RWPE1 (cell line): ENCODE measurements at regions of chr1 and their contacts with region 1.

Region 1: GRCh38 chr1:223556414-223557129 is 108.9 kb downstream of the CAPN8 start:
- DNase-seq: peak; percentile 36
- H3K27ac ChIP-seq: no peak overlapping the region
- CTCF ChIP-seq: no peak; the same call in 1 of the 2 replicates

Region 2: DNA sequence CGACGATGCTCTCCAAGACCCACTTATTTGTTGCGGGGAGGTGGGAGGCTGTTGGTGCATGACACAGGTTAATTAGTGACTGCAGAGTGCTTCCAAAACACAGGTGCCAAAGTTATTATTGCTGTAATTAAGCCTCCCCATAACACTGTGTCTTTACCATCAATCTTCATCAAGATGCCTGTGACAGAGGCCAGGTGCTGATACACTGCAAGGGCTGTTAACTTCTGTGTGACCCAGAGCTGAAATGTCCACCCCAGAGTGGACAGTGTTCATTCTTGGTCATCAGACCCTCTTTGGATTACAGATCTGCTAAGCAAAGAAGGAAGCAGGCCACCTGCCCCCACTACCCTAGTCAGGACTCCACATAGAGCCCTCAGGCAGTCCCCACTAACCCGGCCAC is 53.4 kb after region 1 on chr1:
- CTCF ChIA-PET with region 1: interaction called, 16 read pairs
- POLR2A ChIA-PET with region 1: no interaction called
- DNase-seq: no peak
- H3K27ac ChIP-seq: no peak overlapping the region
- CTCF ChIP-seq: no peak

Region 3: DNA sequence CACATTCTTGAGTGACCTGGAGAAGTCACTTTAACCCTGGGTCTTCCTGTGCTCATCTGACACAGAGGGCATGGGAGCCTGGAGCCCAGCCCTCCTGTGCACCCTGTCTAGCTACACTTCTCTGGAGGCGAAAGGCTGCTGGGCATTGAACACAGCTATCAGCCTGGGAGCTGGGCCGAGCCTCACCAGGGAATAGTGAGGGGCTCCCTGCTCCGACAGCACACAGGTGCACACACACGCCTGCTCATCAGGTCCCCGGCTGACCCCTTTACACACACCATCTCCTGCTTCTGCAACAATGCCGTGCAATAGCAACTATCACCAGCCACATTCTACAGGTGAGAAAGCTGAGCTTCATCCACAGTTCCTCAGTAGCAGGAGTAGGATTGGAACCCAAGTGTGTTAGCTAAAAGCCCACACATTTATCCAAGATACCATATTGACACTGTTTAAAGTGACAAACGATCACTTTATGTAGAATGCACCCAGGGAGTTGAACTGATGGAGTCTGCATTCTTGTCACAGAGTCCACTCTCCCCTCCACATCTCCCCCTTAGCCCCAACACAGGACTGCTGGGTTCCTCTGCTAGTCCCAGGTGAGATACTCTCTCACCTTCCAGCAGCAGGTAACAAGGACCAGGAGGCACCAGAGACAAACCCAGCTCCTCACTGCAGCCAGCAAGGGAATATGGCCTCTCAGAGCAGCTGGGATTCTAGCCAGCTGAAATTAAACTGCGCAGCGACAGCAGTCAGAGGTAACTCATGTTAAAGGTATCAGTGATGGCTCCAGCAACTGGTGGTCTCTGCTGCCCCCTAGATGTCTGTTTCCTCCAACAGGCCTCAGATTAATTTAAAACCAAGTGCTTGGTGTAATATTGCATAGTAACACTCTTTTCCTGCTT is 127.3 kb after region 1 on chr1:
- CTCF ChIA-PET with region 1: interaction called, 12 read pairs
- POLR2A ChIA-PET with region 1: no interaction called
- DNase-seq: peak; percentile 61
- H3K27ac ChIP-seq: no peak overlapping the region
- CTCF ChIP-seq: peak; percentile 73

Region 4: GRCh38 chr1:223819730-223820514 is 263.4 kb after region 1 on chr1:
- CTCF ChIA-PET with region 1: no interaction called
- POLR2A ChIA-PET with region 1: no interaction called
- DNase-seq: no peak
- H3K27ac ChIP-seq: peak overlapping the region; percentile 38; the same call in 1 of the 2 replicates
- CTCF ChIP-seq: no peak